Activated CD4-positive, alpha-beta T cell treated with anti-CD3 and anti-CD28 coated beads for 36 hours (primary cell): ENCODE measurements at regions of chr2 and their contacts with region 1.

Region 1: GRCh38 chr2:161992526-161992925 is 81.5 kb downstream of the DPP4 start:
- DNase-seq: peak; percentile 72
- ATAC-seq: peak; percentile 87
- H3K4me3 Mint-ChIP-seq: peak overlapping the region; percentile 69
- H3K27ac Mint-ChIP-seq: peak overlapping the region; percentile 92
- H3K4me1 Mint-ChIP-seq: peaks cover 60% of the 10 kb centered on the region
- H3K27me3 Mint-ChIP-seq: no peaks in the 10 kb centered on the region

Region 2: DNA sequence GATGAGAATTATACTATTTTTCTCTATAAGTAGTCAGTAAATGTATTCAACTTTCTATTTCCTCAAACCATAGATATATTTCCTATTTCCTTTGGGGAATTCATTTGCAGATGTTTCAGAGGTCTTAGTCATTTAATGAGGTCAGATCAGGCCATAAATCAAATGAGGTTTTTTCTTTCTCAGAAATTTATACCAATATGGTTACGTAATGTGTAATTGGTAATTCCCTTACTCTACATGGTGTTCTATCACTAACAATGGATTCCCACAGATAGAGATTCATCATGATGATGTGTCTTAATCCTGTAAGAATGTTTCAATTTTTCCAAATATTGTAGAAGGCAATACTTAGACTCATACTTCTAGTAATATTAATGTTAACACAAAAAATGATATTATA is 26.5 kb before region 1 on chr2:
- CTCF ChIA-PET with region 1: interaction called, 5 read pairs
- POLR2A ChIA-PET with region 1: no interaction called
- intact Hi-C with region 1: loop called in 1 of 2 experiments (anchors 2 kb)
- DNase-seq: no peak
- ATAC-seq: peak; percentile 68
- H3K4me3 Mint-ChIP-seq: no peak overlapping the region
- H3K27ac Mint-ChIP-seq: no peak overlapping the region
- H3K4me1 Mint-ChIP-seq: peaks cover 26% of the 10 kb centered on the region
- H3K27me3 Mint-ChIP-seq: peaks cover 3% of the 10 kb centered on the region

Region 3: DNA sequence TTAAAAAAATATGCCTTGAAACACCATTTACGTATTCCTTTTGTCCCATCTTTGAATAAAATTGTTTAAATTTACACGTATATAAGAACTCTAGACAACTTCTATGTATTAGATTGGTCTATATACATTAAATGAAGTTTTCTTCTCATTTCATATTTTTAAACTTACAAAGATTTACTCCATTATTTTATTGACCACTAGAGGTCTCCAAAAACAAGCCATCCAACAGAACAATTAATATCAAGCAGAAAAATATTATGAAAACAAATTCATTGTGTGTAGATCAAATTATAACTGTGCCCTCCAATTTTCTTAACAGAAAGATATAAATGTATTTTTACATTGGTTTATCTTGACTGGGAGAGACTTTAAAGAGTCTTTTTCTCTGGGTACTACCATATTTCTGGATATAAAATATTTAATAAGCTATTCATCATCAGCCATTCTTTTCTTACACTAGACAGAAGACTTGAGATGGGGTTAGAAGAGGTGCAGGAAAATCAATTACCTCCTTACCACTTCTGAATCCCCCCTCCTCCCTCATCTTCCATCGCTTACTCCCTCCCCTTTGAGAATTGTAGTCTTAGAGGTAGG is 15.0 kb after region 1 on chr2:
- CTCF ChIA-PET with region 1: interaction called, 21 read pairs
- POLR2A ChIA-PET with region 1: no interaction called
- intact Hi-C with region 1: loop called in 1 of 2 experiments (anchors 1 kb)
- DNase-seq: no peak
- ATAC-seq: no peak
- H3K4me3 Mint-ChIP-seq: no peak overlapping the region
- H3K27ac Mint-ChIP-seq: no peak overlapping the region
- H3K4me1 Mint-ChIP-seq: peaks cover 43% of the 10 kb centered on the region
- H3K27me3 Mint-ChIP-seq: no peaks in the 10 kb centered on the region

Region 4: GRCh38 chr2:162560291-162560690 is 567.8 kb after region 1 on chr2:
- CTCF ChIA-PET with region 1: no interaction called
- POLR2A ChIA-PET with region 1: no interaction called
- intact Hi-C with region 1: no loop called
- DNase-seq: no peak
- ATAC-seq: no peak
- H3K4me3 Mint-ChIP-seq: no peak overlapping the region
- H3K27ac Mint-ChIP-seq: no peak overlapping the region
- H3K4me1 Mint-ChIP-seq: no peaks in the 10 kb centered on the region
- H3K27me3 Mint-ChIP-seq: no peaks in the 10 kb centered on the region